Breast epithelium (tissue), 4 donors: ENCODE measurements at regions of chr1 and their contacts with region 1.

Region 1: GRCh38 chr1:245906207-245906606 is 600.9 kb downstream of the SMYD3 start:
- DNase-seq: no peak
- H3K4me3 ChIP-seq: no peak overlapping the region
- H3K27ac ChIP-seq: no peak overlapping the region
- H3K4me1 ChIP-seq: no peaks in the 10 kb centered on the region
- H3K27me3 ChIP-seq: no peaks in the 10 kb centered on the region
- CTCF ChIP-seq: no peak
- POLR2A ChIP-seq: no peak

Region 2: GRCh38 chr1:245921417-245921816 is 15.2 kb after region 1 on chr1:
- intact Hi-C with region 1: loop called (anchors 1 kb)
- DNase-seq: no peak
- H3K4me3 ChIP-seq: no peak overlapping the region
- H3K27ac ChIP-seq: no peak overlapping the region
- H3K4me1 ChIP-seq: no peaks in the 10 kb centered on the region
- H3K27me3 ChIP-seq: no peaks in the 10 kb centered on the region
- CTCF ChIP-seq: no peak
- POLR2A ChIP-seq: no peak